Heart right ventricle (tissue), 16 donors: ENCODE measurements at regions of chrX and their contacts with region 1.

Region 1: GRCh38 chrX:154515878-154516655 is at the start of gene FAM3A:
- DNase-seq: peak; percentile 93 to 95
- ATAC-seq: peak; percentile 95 to 98 (median 97)
- H3K4me3 ChIP-seq: peak within 1 kb of the TSS; percentile 47 to 82 (median 72)
- H3K27ac ChIP-seq: peak within 1 kb of the TSS; percentile 84 to 99 (median 94)
- H3K4me1 ChIP-seq: peaks cover 0 to 27% (median 13%) of the 10 kb centered on the region in 9 donors
- H3K27me3 ChIP-seq: peaks cover 0 to 5% (median 0%) of the 10 kb centered on the region in 7 donors
- CTCF ChIP-seq: no peak
- total RNA-seq, gene FAM3A: 36.5 to 73.9 (median 48.4) TPM

Region 2: DNA sequence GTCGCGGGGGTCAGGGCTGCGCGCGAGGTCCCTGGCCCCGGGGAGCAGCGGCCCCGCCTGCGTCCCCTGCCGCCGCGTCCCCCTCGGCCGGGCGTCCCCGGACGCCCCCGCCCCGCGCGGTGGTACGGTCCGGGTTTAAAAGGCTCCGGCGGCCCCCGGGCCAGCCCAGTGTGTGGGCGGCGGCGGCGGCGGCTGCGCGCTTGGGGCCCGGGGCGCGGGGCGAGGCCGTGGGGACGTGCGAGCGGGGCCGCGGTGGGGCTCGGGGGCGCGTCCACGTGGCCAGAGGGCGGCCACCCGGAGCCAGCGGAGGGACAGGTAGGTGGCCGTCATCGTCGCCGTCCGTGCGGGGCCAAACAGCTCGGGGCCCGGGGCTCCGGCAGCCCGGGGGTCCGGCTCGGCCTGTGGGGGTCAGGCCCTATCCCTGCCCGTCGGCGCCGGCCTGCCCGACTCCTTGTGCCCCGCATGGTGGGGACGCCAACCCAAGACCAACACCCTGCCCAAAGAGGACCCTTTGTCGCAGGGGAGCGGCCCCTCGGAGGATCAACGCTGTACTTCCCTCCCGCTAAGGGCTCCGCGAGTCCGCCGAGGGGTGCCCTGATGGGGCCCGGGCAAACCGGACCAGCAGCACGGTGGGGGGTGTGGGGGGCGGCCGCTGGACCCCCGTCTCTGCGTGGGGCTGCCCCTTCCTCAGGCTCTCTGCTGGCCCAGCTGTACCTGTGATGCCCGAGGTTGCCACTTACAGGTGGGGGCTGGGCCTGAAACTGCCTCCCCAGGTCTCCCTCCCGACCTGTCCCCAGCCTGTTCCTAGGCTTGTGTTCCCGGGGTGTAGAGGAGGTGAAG is 57.7 kb before region 1 on chrX and contains the start of gene PLXNA3:
- intact Hi-C with region 1: loop called in 1 of 10 experiments (anchors 10 kb)
- DNase-seq: peak; percentile 14 to 54
- ATAC-seq: peak; percentile 35 to 86 (median 56)
- H3K4me3 ChIP-seq: peak within 1 kb of the TSS; percentile 21 to 71 (median 62)
- H3K27ac ChIP-seq: peak within 1 kb of the TSS; percentile 43 to 84 (median 66)
- H3K4me1 ChIP-seq: peaks cover 0 to 9% (median 5%) of the 10 kb centered on the region in 9 donors
- H3K27me3 ChIP-seq: peaks cover 0 to 6% (median 0%) of the 10 kb centered on the region in 7 donors
- CTCF ChIP-seq: no peak
- total RNA-seq, gene PLXNA3: 11.6 to 35.3 (median 16.7) TPM

Region 3: DNA sequence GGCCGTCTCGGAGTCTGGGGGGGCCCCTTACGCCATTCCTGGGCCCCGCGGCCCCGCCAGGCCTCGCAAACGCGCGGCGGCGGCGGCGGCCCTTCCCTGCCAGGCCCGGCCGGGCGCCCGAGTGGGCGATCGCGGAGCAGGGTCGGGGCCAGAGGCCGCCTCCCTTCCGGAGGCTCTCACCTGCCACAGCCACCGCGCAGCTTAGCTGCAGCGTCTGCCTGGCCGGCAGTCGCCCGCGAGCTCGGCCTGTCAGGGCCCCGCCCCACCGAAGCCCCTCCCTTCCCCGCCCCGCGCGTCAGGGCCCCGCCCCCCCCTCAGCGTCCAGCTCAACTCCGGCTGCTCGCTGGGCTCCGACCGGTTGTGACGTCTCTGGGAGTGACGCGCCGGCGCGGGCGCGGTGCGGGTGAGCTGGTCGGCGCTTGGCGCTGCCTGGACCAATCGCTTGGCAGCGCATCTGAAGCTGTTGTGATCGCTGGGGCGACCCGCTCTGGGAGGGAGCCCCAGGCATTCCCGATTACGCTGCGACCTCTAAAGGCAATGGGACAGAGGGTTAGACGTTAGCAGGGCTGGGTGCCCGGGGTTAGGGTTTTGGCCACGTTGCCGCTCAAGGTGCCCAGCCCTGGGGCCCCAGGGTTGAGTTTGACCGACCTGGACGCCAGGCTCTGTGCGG is 25.5 kb before region 1 on chrX and contains the start of gene SLC10A3:
- intact Hi-C with region 1: loop called in 3 of 10 experiments (anchors 1 to 2 kb)
- DNase-seq: peak; percentile 91 to 93
- ATAC-seq: peak; percentile 89 to 95 (median 92)
- H3K4me3 ChIP-seq: peak within 1 kb of the TSS; percentile 58 to 86 (median 66)
- H3K27ac ChIP-seq: peak within 1 kb of the TSS; percentile 91 to 97 (median 94)
- H3K4me1 ChIP-seq: peaks cover 0 to 21% (median 11%) of the 10 kb centered on the region in 9 donors
- H3K27me3 ChIP-seq: no peaks in the 10 kb centered on the region
- CTCF ChIP-seq: peak in 3 of 9 donors; percentile 20 to 31 (median 27)
- total RNA-seq, gene SLC10A3: 8.7 to 19.8 (median 11.7) TPM